Endothelial cell of umbilical vein (primary cell): ENCODE measurements at regions of chr11 and their contacts with region 1.

Region 1: GRCh38 chr11:76588455-76589325 is 81.9 kb downstream of the LRRC32 start:
- DNase-seq: peak; percentile 99
- H3K4me3 ChIP-seq: no peak overlapping the region
- H3K27ac ChIP-seq: peak overlapping the region; percentile 94
- H3K4me1 ChIP-seq: peaks cover 23% of the 10 kb centered on the region
- H3K27me3 ChIP-seq: no peaks in the 10 kb centered on the region
- CTCF ChIP-seq: no peak
- POLR2A ChIP-seq: peak; percentile 88

Region 2: GRCh38 chr11:76551400-76551799 is 37.3 kb before region 1 on chr11:
- CTCF ChIA-PET with region 1: interaction called, 5 read pairs
- POLR2A ChIA-PET with region 1: no interaction called
- dilution Hi-C with region 1: no loop called
- intact Hi-C with region 1: loop called (anchors 2 kb)
- DNase-seq: peak; percentile 65
- H3K4me3 ChIP-seq: no peak overlapping the region
- H3K27ac ChIP-seq: peak overlapping the region; percentile 42
- H3K4me1 ChIP-seq: peaks cover 42% of the 10 kb centered on the region
- H3K27me3 ChIP-seq: no peaks in the 10 kb centered on the region
- CTCF ChIP-seq: peak in 1 of 2 donors; percentile 7
- POLR2A ChIP-seq: no peak

Region 3: GRCh38 chr11:76700177-76701100 is 111.7 kb after region 1 on chr11:
- CTCF ChIA-PET with region 1: no interaction called
- POLR2A ChIA-PET with region 1: no interaction called
- dilution Hi-C with region 1: no loop called
- intact Hi-C with region 1: no loop called
- DNase-seq: peak; percentile 95
- H3K4me3 ChIP-seq: no peak overlapping the region
- H3K27ac ChIP-seq: peak overlapping the region; percentile 53
- H3K4me1 ChIP-seq: peaks cover 29% of the 10 kb centered on the region
- H3K27me3 ChIP-seq: no peaks in the 10 kb centered on the region
- CTCF ChIP-seq: no peak
- POLR2A ChIP-seq: peak; percentile 52